ENCODE measurements at regions of chr13 and their contacts with region 1.

Region 1: DNA sequence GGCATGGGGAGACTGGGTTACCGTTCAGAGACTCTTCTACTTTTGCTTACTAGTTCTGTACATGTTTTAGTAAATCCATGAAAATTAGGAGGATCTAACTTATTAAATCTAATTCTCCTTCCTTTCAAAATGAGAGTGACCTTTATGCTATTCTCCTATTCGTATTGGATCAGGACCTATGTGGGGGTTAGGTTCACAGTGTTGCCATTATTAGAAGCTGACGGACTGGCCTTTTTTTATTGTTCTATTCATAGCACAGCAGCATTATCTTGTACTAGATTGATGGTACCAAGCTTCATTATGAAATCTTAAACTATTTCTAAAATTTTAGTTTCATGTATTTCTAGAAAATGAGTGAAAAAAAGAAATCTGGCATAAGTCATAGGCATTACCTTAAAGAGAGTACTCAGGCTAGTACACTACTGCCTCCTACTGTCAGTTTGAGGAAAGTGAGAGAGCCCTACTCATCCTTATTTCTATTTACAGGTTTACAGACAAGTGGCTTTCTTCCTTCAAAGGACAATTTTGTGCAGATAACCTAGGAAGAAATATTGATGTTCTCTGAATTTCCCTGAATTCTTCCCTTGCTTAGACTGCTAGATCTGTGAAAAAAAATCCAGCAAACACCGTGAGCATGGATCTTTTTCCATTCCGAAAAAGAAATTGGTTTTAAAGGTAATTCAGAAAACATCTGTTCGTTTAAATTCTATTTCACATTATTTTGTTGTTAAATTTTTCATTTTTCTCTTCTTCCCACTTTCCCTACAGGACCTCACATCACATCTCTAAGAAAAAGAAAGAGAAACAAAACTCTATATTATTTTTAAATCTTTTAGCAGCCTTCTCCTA is 485.5 kb downstream of the DIAPH3 start:
- DNase-seq: peak; percentile 45
- CTCF ChIP-seq: peak; percentile 54

Region 2: GRCh38 chr13:59391696-59392095 is 286.5 kb before region 1 on chr13:
- in situ Hi-C with region 1: loop called (anchors 10 kb)
- DNase-seq: peak; percentile 58
- CTCF ChIP-seq: peak; percentile 79

Region 3: DNA sequence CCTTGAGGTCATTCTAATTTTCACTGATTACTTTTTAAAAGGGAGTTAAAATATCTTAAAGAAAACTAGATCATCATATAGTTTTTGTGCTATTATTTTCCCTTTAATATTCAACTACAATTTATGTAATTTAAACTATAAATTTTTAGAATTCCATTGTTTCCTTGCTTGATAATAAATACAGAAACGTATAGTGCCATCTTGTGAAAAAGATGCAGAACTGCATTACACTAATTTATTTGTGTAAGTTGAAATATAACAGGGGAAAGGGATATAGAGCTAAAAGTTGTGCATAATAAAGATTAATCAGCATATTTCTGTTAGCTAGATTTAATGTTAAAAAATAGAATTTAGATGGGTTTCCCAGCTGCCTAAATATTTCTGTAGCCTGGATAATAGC is 657.3 kb after region 1 on chr13:
- in situ Hi-C with region 1: loop called (anchors 10 kb)
- DNase-seq: no peak
- CTCF ChIP-seq: peak; percentile 32

Region 4: DNA sequence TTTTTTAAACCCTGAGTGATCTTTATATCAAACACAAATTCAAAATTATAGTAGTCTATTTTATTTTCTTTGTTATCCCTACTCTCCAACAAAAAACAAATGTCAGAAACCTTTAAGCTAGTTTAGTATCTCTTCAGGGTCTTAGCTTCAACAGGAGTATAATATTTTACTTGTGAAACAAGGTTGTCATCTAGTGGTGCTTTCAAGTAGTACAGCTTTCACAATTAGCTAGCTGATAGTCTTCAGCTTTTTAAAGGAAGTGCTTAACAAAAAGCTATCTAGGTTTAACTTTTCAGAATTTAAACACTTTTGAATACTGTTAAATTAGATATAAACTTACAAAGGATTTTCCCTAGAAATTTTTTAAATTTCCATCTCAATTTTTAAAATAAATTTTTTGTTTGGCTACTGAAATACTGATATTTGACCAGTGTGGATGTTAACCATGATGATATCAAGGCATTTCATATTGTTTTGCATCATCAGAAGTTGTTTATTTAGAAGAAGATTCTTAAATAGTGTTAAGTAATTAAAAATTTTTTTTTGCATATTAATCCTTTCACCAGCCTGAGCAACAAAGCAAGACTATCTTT is 753.0 kb after region 1 on chr13:
- in situ Hi-C with region 1: loop called (anchors 25 kb)
- DNase-seq: no peak
- CTCF ChIP-seq: peak; percentile 68

Measured in GM13976 (cell line).